Prostate gland (tissue), 2 donors: ENCODE measurements at regions of chr12 and their contacts with region 1.

Region 1: GRCh38 chr12:77001181-77001758 is 64.1 kb downstream of the E2F7 start:
- DNase-seq: no peak
- H3K4me3 ChIP-seq: no peak overlapping the region
- H3K27ac ChIP-seq: no peak overlapping the region
- H3K4me1 ChIP-seq: no peaks in the 10 kb centered on the region
- H3K27me3 ChIP-seq: no peaks in the 10 kb centered on the region
- CTCF ChIP-seq: no peak
- POLR2A ChIP-seq: no peak

Region 2: GRCh38 chr12:76790564-76791552 is 210.4 kb before region 1 on chr12:
- intact Hi-C with region 1: loop called (anchors 10 kb)
- DNase-seq: no peak
- H3K4me3 ChIP-seq: no peak overlapping the region
- H3K27ac ChIP-seq: no peak overlapping the region
- H3K4me1 ChIP-seq: no peaks in the 10 kb centered on the region
- H3K27me3 ChIP-seq: no peaks in the 10 kb centered on the region
- CTCF ChIP-seq: peak; percentile 39 to 80 (median 73)
- POLR2A ChIP-seq: no peak